Motor neuron (in vitro differentiated cells): ENCODE measurements at regions of chr3 and their contacts with region 1.

Region 1: GRCh38 chr3:81684751-81685395 is 76.6 kb downstream of the GBE1 start:
- ATAC-seq: peak in 6 of 8 experiments; percentile 26 to 61 (median 36)
- H3K4me3 ChIP-seq: no peak overlapping the region
- H3K27ac ChIP-seq: no peak overlapping the region
- H3K4me1 ChIP-seq: no peaks in the 10 kb centered on the region

Region 2: DNA sequence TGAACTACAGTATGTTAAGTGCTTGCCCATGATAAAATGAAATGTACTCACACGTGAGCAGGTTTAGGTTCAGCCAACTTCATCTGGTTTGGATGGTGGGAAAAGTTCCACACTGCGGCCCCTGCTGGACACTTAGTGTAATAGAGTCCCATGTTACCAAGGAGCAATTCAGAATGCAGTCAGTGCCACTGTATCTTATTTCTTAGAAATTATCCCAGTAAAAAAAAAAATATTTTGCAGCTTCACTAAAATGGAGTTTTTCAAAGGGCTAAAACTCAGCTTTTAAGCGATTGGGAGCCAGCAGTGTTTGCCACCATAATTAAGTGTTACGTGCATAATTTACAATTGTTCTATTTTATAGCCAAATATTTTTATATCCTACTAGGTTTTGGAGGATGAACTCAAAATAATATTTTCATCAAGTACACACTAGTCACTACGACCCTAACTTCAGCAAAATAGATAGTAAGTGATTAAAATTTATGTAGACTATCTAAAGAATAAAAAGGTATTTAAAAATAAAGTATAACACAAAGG is 448.3 kb after region 1 on chr3:
- in situ Hi-C with region 1: loop called in 1 of 9 experiments (anchors 25 kb)
- ATAC-seq: peak in 4 of 8 experiments; percentile 66 to 79 (median 72)
- H3K4me3 ChIP-seq: no peak overlapping the region
- H3K27ac ChIP-seq: no peak overlapping the region
- H3K4me1 ChIP-seq: peaks cover 0 to 11% of the 10 kb centered on the region in 2 donors